ENCODE measurements at regions of chr6 and their contacts with region 1.

Region 1: GRCh38 chr6:21589352-21590345 is 3.9 kb upstream of the SOX4 start:
- DNase-seq: peak; percentile 85 to 89
- H3K4me3 ChIP-seq: peak overlapping the region; percentile 57 to 71
- H3K27ac ChIP-seq: peak overlapping the region; percentile 88
- H3K4me1 ChIP-seq: no peaks in the 10 kb centered on the region
- H3K27me3 ChIP-seq: no peaks in the 10 kb centered on the region
- CTCF ChIP-seq: peak; percentile 85 to 95 (median 89)
- POLR2A ChIP-seq: no peak

Region 2: GRCh38 chr6:20564269-20564668 is 1025.4 kb before region 1 on chr6:
- intact Hi-C with region 1: loop called (anchors 10 kb)
- DNase-seq: no peak
- H3K4me3 ChIP-seq: no peak overlapping the region
- H3K27ac ChIP-seq: no peak overlapping the region
- H3K4me1 ChIP-seq: peaks cover 0 to 6% of the 10 kb centered on the region in 2 donors
- H3K27me3 ChIP-seq: no peaks in the 10 kb centered on the region
- CTCF ChIP-seq: peak; percentile 47 to 65 (median 60)
- POLR2A ChIP-seq: no peak

Region 3: GRCh38 chr6:21325201-21325856 is 264.3 kb before region 1 on chr6:
- intact Hi-C with region 1: no loop called
- DNase-seq: no peak
- H3K4me3 ChIP-seq: no peak overlapping the region
- H3K27ac ChIP-seq: no peak overlapping the region
- H3K4me1 ChIP-seq: no peaks in the 10 kb centered on the region
- H3K27me3 ChIP-seq: no peaks in the 10 kb centered on the region
- CTCF ChIP-seq: no peak
- POLR2A ChIP-seq: no peak

Region 4: GRCh38 chr6:21489826-21490225 is 99.8 kb before region 1 on chr6:
- intact Hi-C with region 1: no loop called
- DNase-seq: no peak
- H3K4me3 ChIP-seq: no peak overlapping the region
- H3K27ac ChIP-seq: no peak overlapping the region
- H3K4me1 ChIP-seq: no peaks in the 10 kb centered on the region
- H3K27me3 ChIP-seq: no peaks in the 10 kb centered on the region
- CTCF ChIP-seq: no peak
- POLR2A ChIP-seq: no peak

Region 5: GRCh38 chr6:21808045-21808470 is 218.4 kb after region 1 on chr6:
- intact Hi-C with region 1: no loop called
- DNase-seq: peak; percentile 46 to 57
- H3K4me3 ChIP-seq: no peak overlapping the region
- H3K27ac ChIP-seq: peak overlapping the region; percentile 75 to 83
- H3K4me1 ChIP-seq: peaks cover 0 to 4% of the 10 kb centered on the region in 2 donors
- H3K27me3 ChIP-seq: no peaks in the 10 kb centered on the region
- CTCF ChIP-seq: no peak
- POLR2A ChIP-seq: no peak

Measured in uterus (tissue), 4 donors.